PC-9 (cell line): ENCODE measurements at regions of chr13 and their contacts with region 1.

Region 1: GRCh38 chr13:42110410-42111155 is 62.1 kb downstream of the DGKH start:
- DNase-seq: peak in 1 of 2 experiments; percentile 45
- H3K4me3 ChIP-seq: no peak overlapping the region
- H3K27ac ChIP-seq: no peak overlapping the region
- H3K4me1 ChIP-seq: peaks cover 19% of the 10 kb centered on the region
- H3K27me3 ChIP-seq: no peaks in the 10 kb centered on the region
- CTCF ChIP-seq: peak; percentile 82

Region 2: DNA sequence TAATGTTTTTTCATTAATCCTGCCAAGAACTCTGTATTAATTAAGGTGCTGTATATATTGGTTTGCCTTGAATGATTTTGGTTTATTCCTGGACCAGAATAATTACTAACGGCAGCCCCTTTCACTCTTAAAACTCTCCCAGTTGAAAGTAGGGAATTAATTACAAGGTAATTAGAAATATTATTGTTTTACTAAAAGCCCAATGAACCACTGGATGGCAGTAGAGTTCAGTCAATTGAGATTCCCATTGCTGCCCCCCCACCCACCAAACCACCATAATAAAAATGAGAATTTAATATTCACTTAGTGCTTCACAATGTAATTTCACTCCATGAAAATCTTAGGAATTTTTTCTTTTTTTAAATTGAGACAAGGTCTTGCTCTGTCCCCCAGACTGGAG is 1035.5 kb before region 1 on chr13:
- CTCF ChIA-PET with region 1: no interaction called
- POLR2A ChIA-PET with region 1: no interaction called
- intact Hi-C with region 1: loop called (anchors 2 kb)
- DNase-seq: peak in 1 of 2 experiments; percentile 6
- H3K4me3 ChIP-seq: no peak overlapping the region
- H3K27ac ChIP-seq: no peak overlapping the region
- H3K4me1 ChIP-seq: no peaks in the 10 kb centered on the region
- H3K27me3 ChIP-seq: no peaks in the 10 kb centered on the region
- CTCF ChIP-seq: peak; percentile 70

Region 3: DNA sequence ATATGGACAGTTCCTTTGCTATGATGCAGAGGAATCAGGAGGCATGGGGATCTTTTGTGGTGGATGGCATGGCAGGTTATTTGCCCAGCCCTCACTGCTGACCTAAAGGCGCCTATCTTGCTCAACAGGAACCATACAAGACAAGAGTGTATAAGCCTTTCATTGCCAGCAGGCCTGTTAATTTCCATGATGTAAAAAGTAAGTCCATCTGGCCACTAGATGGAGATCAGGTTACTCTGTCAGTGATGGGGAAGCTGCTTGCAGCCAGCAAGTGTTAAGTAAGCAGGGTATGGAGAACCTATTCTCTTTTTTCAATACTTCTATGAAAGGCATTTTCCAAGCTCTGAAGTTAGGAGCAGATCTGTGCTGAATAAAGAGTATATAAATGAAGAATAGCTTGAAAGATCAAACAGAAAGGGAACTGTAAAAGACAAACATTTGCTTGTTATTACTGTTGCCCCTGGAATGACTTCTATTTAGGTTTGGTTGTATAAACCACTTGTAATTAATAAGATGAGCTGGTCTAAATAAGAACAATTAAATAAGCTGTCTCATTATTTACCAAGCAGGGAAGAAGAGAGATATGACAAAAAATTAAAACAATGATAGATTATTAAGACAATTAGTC is 442.3 kb before region 1 on chr13:
- CTCF ChIA-PET with region 1: interaction called, 4 read pairs
- POLR2A ChIA-PET with region 1: no interaction called
- intact Hi-C with region 1: loop called (anchors 1 kb)
- DNase-seq: peak; percentile 37 to 88
- H3K4me3 ChIP-seq: no peak overlapping the region
- H3K27ac ChIP-seq: no peak overlapping the region
- H3K4me1 ChIP-seq: peaks cover 4% of the 10 kb centered on the region; the same call in 1 of the 2 replicates
- H3K27me3 ChIP-seq: no peaks in the 10 kb centered on the region
- CTCF ChIP-seq: peak; percentile 76

Region 4: GRCh38 chr13:41811588-41812021 is 299.0 kb before region 1 on chr13:
- CTCF ChIA-PET with region 1: interaction called, 12 read pairs
- POLR2A ChIA-PET with region 1: no interaction called
- intact Hi-C with region 1: no loop called
- DNase-seq: no peak
- H3K4me3 ChIP-seq: no peak overlapping the region
- H3K27ac ChIP-seq: no peak overlapping the region
- H3K4me1 ChIP-seq: no peaks in the 10 kb centered on the region
- H3K27me3 ChIP-seq: no peaks in the 10 kb centered on the region
- CTCF ChIP-seq: no peak

Region 5: GRCh38 chr13:41895478-41895877 is 215.1 kb before region 1 on chr13:
- CTCF ChIA-PET with region 1: no interaction called
- POLR2A ChIA-PET with region 1: no interaction called
- intact Hi-C with region 1: no loop called
- DNase-seq: no peak
- H3K4me3 ChIP-seq: no peak overlapping the region
- H3K27ac ChIP-seq: no peak overlapping the region
- H3K4me1 ChIP-seq: no peaks in the 10 kb centered on the region
- H3K27me3 ChIP-seq: no peaks in the 10 kb centered on the region
- CTCF ChIP-seq: no peak

Region 6: GRCh38 chr13:41905600-41906254 is 204.9 kb before region 1 on chr13:
- CTCF ChIA-PET with region 1: interaction called, 11 read pairs
- POLR2A ChIA-PET with region 1: no interaction called
- intact Hi-C with region 1: loop called (anchors 2 kb)
- DNase-seq: no peak
- H3K4me3 ChIP-seq: no peak overlapping the region
- H3K27ac ChIP-seq: no peak overlapping the region
- H3K4me1 ChIP-seq: no peaks in the 10 kb centered on the region
- H3K27me3 ChIP-seq: no peaks in the 10 kb centered on the region
- CTCF ChIP-seq: peak; percentile 63

Region 7: GRCh38 chr13:42048682-42049453 is 61.7 kb before region 1 on chr13:
- CTCF ChIA-PET with region 1: interaction called, 3 read pairs
- POLR2A ChIA-PET with region 1: no interaction called
- intact Hi-C with region 1: loop called (anchors 5 kb)
- DNase-seq: peak; percentile 38 to 77
- H3K4me3 ChIP-seq: peak overlapping the region; percentile 81
- H3K27ac ChIP-seq: 0 out of 2 replicates have a peak overlapping the region, but pooled peaks have one; percentile 39
- H3K4me1 ChIP-seq: peaks cover 11% of the 10 kb centered on the region
- H3K27me3 ChIP-seq: no peaks in the 10 kb centered on the region
- CTCF ChIP-seq: no peak

Region 8: GRCh38 chr13:42420304-42420703 is 309.7 kb after region 1 on chr13:
- CTCF ChIA-PET with region 1: no interaction called
- POLR2A ChIA-PET with region 1: no interaction called
- intact Hi-C with region 1: no loop called
- DNase-seq: no peak
- H3K4me3 ChIP-seq: no peak overlapping the region
- H3K27ac ChIP-seq: no peak overlapping the region
- H3K4me1 ChIP-seq: no peaks in the 10 kb centered on the region
- H3K27me3 ChIP-seq: no peaks in the 10 kb centered on the region
- CTCF ChIP-seq: no peak